Caco-2 (cell line): ENCODE measurements at regions of chr12 and their contacts with region 1.

Region 1: DNA sequence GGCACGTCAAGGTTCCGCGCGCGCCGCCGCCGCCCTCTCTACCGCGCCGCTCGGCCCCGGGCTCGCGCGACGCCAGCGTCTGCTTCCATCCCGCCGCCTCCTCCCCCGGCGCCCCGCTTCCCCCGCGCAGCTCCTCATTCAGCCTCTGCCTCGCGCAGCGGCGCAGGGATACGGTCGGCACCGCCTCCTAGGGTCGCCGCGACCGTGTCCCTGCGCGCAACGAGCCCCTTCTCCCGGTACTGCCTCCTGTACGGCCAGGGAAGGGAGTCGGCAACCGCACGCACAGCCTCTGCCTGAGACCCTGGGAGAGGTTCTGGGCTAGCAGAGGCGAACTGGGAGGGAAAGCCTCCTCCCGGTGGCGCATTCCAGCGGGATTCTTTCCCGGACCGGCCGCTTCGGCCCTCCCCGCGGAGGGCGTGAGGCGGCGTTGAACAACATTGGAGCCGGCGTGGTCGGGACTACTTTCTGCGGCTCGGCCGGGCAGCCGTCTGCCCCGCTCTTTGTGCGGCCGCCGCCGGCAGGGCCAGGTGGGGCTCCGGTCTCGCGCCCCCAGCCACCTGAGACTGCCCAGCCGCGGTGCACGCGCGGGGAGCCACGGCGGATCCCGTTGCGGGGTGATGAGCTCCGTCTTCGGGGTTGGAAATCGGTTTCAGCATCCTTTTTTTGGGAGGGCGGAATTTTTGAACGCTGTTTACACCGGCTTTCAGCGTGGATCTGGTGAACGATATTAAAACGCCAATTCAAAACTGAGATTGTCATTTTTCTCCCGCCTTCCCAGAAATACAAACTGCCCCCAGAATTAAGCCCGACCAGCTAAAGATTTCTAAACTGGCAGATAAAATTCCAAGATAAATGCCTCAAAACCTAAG is at the start of gene LRP6:
- DNase-seq: peak; percentile 97 to 98
- H3K4me3 ChIP-seq: peak within 1 kb of the TSS; percentile 100
- H3K4me3 Mint-ChIP-seq: peak within 1 kb of the TSS; percentile 91
- H3K27ac Mint-ChIP-seq: peak within 1 kb of the TSS; percentile 99
- H3K4me1 ChIP-seq: peaks cover 12% of the 10 kb centered on the region; the same call in 1 of the 2 replicates
- H3K4me1 Mint-ChIP-seq: peaks cover 33% of the 10 kb centered on the region
- H3K27me3 ChIP-seq: no peaks in the 10 kb centered on the region
- H3K27me3 Mint-ChIP-seq: no peaks in the 10 kb centered on the region
- CTCF ChIP-seq: no peak
- total RNA-seq, gene LRP6: 72.7 and 78.4 TPM in 2 replicates

Region 2: GRCh38 chr12:12070674-12071656 is 196.1 kb before region 1 on chr12 and contains the start of gene BCL2L14:
- CTCF ChIA-PET with region 1: no interaction called
- POLR2A ChIA-PET with region 1: no interaction called
- intact Hi-C with region 1: no loop called
- DNase-seq: peak; percentile 74 to 77
- H3K4me3 ChIP-seq: peak within 1 kb of the TSS; percentile 49
- H3K4me3 Mint-ChIP-seq: peak within 1 kb of the TSS; percentile 66
- H3K27ac Mint-ChIP-seq: peak within 1 kb of the TSS; percentile 73
- H3K4me1 ChIP-seq: peaks cover 27% of the 10 kb centered on the region
- H3K4me1 Mint-ChIP-seq: peaks cover 23% of the 10 kb centered on the region
- H3K27me3 ChIP-seq: no peaks in the 10 kb centered on the region
- H3K27me3 Mint-ChIP-seq: no peaks in the 10 kb centered on the region
- CTCF ChIP-seq: peak in 1 of 2 experiments; percentile 48
- total RNA-seq, gene BCL2L14: 5.9 and 8.0 TPM in 2 replicates

Region 3: GRCh38 chr12:12081836-12082497 is 185.1 kb before region 1 on chr12:
- CTCF ChIA-PET with region 1: interaction called, 4 read pairs
- POLR2A ChIA-PET with region 1: interaction called, 9 read pairs
- intact Hi-C with region 1: loop called (anchors 2 kb)
- DNase-seq: peak; percentile 62 to 67
- H3K4me3 ChIP-seq: no peak overlapping the region
- H3K4me3 Mint-ChIP-seq: no peak overlapping the region
- H3K27ac Mint-ChIP-seq: peak overlapping the region; percentile 29
- H3K4me1 ChIP-seq: peaks cover 10% of the 10 kb centered on the region; the same call in 1 of the 2 replicates
- H3K4me1 Mint-ChIP-seq: peaks cover 15% of the 10 kb centered on the region
- H3K27me3 ChIP-seq: no peaks in the 10 kb centered on the region
- H3K27me3 Mint-ChIP-seq: no peaks in the 10 kb centered on the region
- CTCF ChIP-seq: peak; percentile 37 to 42

Region 4: GRCh38 chr12:12138203-12139154 is 128.6 kb before region 1 on chr12:
- CTCF ChIA-PET with region 1: no interaction called
- POLR2A ChIA-PET with region 1: interaction called, 22 read pairs
- intact Hi-C with region 1: no loop called
- DNase-seq: no peak
- H3K4me3 ChIP-seq: no peak overlapping the region
- H3K4me3 Mint-ChIP-seq: no peak overlapping the region
- H3K27ac Mint-ChIP-seq: no peak overlapping the region
- H3K4me1 ChIP-seq: peaks cover 8% of the 10 kb centered on the region; the same call in 1 of the 2 replicates
- H3K4me1 Mint-ChIP-seq: no peaks in the 10 kb centered on the region
- H3K27me3 ChIP-seq: no peaks in the 10 kb centered on the region
- H3K27me3 Mint-ChIP-seq: no peaks in the 10 kb centered on the region
- CTCF ChIP-seq: no peak

Region 5: DNA sequence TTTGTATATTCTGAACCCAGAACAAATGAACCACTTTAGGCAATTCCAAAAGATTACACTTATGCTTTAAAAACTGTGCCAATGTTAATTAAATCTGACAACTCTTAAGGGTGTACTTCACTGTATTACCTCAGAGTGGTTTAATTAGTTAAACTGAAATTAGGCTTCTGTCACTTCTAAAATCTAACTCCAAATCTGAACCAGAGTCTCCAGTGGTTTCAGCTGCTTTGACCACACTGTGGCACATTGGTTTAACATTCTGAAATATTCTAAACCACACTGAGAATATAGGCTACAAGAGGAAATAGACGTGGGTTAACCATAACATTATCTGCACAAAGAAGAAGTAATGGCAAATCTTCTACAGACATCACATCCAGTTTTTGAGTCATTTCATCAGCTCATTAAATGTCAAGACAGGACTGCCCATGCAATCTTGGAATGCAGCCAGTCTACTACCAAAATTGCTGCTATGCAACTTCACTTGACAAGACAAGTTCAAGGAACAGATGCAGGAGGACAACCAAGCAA is 95.1 kb before region 1 on chr12:
- CTCF ChIA-PET with region 1: no interaction called
- POLR2A ChIA-PET with region 1: no interaction called
- intact Hi-C with region 1: loop called (anchors 5 kb)
- DNase-seq: no peak
- H3K4me3 ChIP-seq: no peak overlapping the region
- H3K4me3 Mint-ChIP-seq: no peak overlapping the region
- H3K27ac Mint-ChIP-seq: no peak overlapping the region
- H3K4me1 ChIP-seq: no peaks in the 10 kb centered on the region
- H3K4me1 Mint-ChIP-seq: peaks cover 10% of the 10 kb centered on the region
- H3K27me3 ChIP-seq: no peaks in the 10 kb centered on the region
- H3K27me3 Mint-ChIP-seq: no peaks in the 10 kb centered on the region
- CTCF ChIP-seq: no peak

Region 6: GRCh38 chr12:12319451-12320183 is 52.5 kb after region 1 on chr12:
- CTCF ChIA-PET with region 1: interaction called, 6 read pairs
- POLR2A ChIA-PET with region 1: interaction called, 22 read pairs
- intact Hi-C with region 1: loop called (anchors 1 kb)
- DNase-seq: no peak
- H3K4me3 ChIP-seq: no peak overlapping the region
- H3K4me3 Mint-ChIP-seq: peak overlapping the region; percentile 69
- H3K27ac Mint-ChIP-seq: peak overlapping the region; percentile 88
- H3K4me1 ChIP-seq: peaks cover 26% of the 10 kb centered on the region
- H3K4me1 Mint-ChIP-seq: peaks cover 39% of the 10 kb centered on the region
- H3K27me3 ChIP-seq: no peaks in the 10 kb centered on the region
- H3K27me3 Mint-ChIP-seq: no peaks in the 10 kb centered on the region
- CTCF ChIP-seq: no peak

Region 7: GRCh38 chr12:12327802-12328201 is 60.7 kb after region 1 on chr12:
- CTCF ChIA-PET with region 1: interaction called, 6 read pairs
- POLR2A ChIA-PET with region 1: interaction called, 10 read pairs
- intact Hi-C with region 1: loop called (anchors 1 kb)
- DNase-seq: peak in 1 of 2 experiments; percentile 69
- H3K4me3 ChIP-seq: no peak overlapping the region
- H3K4me3 Mint-ChIP-seq: no peak overlapping the region
- H3K27ac Mint-ChIP-seq: no peak overlapping the region
- H3K4me1 ChIP-seq: peaks cover 17% of the 10 kb centered on the region
- H3K4me1 Mint-ChIP-seq: peaks cover 23% of the 10 kb centered on the region
- H3K27me3 ChIP-seq: no peaks in the 10 kb centered on the region
- H3K27me3 Mint-ChIP-seq: no peaks in the 10 kb centered on the region
- CTCF ChIP-seq: peak; percentile 83 to 84

Region 8: DNA sequence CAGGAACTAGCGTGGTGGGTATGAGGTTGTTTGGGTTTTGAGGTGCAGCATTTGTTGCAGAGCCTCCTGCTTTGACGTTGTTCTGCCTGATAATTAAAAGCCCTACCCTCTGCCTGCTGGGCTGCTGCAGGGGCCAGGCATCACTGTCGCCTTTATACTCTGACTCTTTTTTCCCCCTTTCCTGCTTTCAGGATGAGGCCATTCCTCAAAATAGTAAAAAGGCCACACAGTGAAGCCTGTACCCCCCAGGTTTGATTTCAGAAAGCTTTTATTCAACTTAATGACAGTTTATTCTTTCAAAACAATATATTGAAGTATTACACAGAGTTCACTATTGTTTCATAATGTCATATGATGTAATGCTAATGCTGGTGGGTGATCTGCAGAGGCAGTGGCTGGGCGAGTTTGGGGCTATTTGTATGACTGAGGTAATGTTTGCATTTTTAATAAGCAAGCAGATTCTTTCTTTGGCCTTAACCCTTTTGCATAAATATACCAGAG is 98.9 kb after region 1 on chr12:
- CTCF ChIA-PET with region 1: no interaction called
- POLR2A ChIA-PET with region 1: no interaction called
- intact Hi-C with region 1: no loop called
- DNase-seq: no peak
- H3K4me3 ChIP-seq: no peak overlapping the region
- H3K4me3 Mint-ChIP-seq: no peak overlapping the region
- H3K27ac Mint-ChIP-seq: no peak overlapping the region
- H3K4me1 ChIP-seq: peaks cover 3% of the 10 kb centered on the region; the same call in 1 of the 2 replicates
- H3K4me1 Mint-ChIP-seq: peaks cover 15% of the 10 kb centered on the region
- H3K27me3 ChIP-seq: no peaks in the 10 kb centered on the region
- H3K27me3 Mint-ChIP-seq: no peaks in the 10 kb centered on the region
- CTCF ChIP-seq: no peak